ENCODE measurements at regions of chr15 and their contacts with region 1.

Region 1: GRCh38 chr15:86624261-86625036 is 544.8 kb downstream of the AGBL1 start:
- DNase-seq: peak; percentile 93 to 97
- ATAC-seq: peak; percentile 99 to 100
- H3K4me3 ChIP-seq: no peak overlapping the region
- H3K27ac ChIP-seq: peak overlapping the region in 1 of 2 experiments; percentile 66; a peak in 3 of 6 replicates
- H3K4me1 ChIP-seq: peaks cover 19% of the 10 kb centered on the region
- CTCF ChIP-seq: peak; percentile 91
- EP300 ChIP-seq: no peak
- POLR2A ChIP-seq: no peak
- RAD21 ChIP-seq: peak; percentile 97 to 99

Region 2: GRCh38 chr15:86611417-86612040 is 12.9 kb before region 1 on chr15:
- CTCF ChIA-PET with region 1: interaction called, 12 read pairs
- POLR2A ChIA-PET with region 1: no interaction called
- DNase-seq: peak in 1 of 2 experiments; percentile 48
- ATAC-seq: peak; percentile 55 to 56; a peak in 4 of 6 replicates
- H3K4me3 ChIP-seq: no peak overlapping the region
- H3K27ac ChIP-seq: peak overlapping the region in 1 of 2 experiments; percentile 28; a peak in 1 of 6 replicates
- H3K4me1 ChIP-seq: peaks cover 8% of the 10 kb centered on the region; the same call in 2 of the 3 replicates
- CTCF ChIP-seq: no peak
- EP300 ChIP-seq: no peak
- POLR2A ChIP-seq: no peak
- RAD21 ChIP-seq: no peak

Region 3: DNA sequence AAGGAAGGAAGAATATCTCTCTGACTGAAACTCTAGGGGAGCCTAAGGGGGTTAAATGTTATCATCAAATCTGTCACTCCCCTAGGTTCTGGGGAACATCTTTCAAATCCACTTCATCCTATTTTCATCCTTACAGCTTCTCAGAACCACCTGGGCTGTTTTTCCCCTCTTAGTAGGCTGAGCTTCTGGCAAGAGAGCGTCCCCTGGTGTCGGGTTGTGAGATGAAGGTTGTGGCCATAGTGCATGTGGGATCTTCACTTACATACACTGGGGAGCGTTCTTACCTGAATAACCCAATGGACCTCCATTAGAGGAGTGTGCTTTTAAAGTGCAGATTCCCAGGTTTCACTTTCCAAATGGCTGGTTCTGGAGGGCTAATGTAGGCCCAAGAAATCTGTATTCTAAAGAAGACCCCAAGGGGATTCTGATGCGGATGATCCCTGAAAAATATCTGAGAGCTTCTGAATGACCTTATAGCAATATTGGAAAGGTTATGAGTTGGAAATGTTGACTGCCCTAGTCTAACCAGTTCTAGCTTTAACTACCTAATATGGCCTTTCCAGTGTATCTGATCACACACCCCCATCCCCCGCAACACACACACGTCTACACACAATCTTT is 118.9 kb after region 1 on chr15:
- CTCF ChIA-PET with region 1: interaction called, 25 read pairs
- POLR2A ChIA-PET with region 1: no interaction called
- DNase-seq: peak; percentile 10 to 68
- ATAC-seq: peak; percentile 43 to 89; a peak in 4 of 6 replicates
- H3K4me3 ChIP-seq: no peak overlapping the region
- H3K27ac ChIP-seq: no peak overlapping the region
- H3K4me1 ChIP-seq: no peaks in the 10 kb centered on the region
- CTCF ChIP-seq: peak; percentile 41
- EP300 ChIP-seq: no peak
- POLR2A ChIP-seq: no peak
- RAD21 ChIP-seq: peak; percentile 41 to 79; a peak in 3 of 5 replicates

Measured in A549 (cell line).